Kidney (tissue), 22 donors: ENCODE measurements at regions of chr1 and their contacts with region 1.

Region 1: DNA sequence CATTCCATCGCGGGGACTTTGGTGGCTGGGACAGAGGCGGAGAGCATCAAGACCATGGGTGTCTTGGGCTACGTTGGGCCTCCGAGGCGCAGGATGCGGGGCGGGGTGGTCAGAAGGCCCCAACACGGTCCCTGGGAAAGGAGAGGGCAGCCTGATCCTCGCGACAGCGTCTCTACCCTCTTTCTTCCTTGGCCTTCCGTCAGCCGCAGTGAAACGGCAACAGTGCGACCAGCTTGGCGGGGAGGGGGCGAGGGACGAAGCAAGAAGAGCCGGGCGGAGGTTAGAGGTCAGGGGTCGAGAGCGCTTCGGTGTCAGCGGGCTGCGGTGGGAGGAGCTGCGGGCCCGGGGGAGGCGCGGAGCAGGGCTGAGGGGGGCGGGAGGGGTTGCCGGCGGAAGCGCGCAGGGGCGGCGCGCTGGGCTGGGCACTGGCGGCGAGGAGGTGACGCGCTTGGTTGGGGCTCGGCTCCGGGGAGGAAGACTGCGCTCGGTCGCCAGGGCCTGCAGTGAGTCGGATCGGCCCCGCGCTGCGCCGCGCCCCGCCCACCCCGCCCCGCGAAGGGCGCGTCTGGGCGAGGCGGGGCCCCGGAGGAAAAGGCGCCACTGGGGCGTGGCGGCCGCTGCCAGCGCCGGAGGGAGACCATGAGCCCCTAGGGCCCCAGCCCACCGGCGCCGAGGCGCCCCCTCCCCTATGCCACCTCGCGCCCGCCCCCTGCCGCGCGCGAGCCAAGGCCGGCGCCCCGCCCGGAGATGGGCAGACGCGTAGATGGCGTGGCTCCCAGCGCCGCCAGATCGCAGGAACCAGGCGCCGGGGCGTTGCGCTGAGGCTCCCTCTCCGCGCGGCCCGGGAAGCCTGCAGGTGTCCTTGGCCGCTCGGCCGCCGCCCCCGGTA is at the start of gene KCNC4:
- DNase-seq: peak; percentile 64 to 98 (median 81)
- H3K4me3 ChIP-seq: peak within 1 kb of the TSS; percentile 40 to 77 (median 56)
- H3K27ac ChIP-seq: peak within 1 kb of the TSS; percentile 93 to 95
- H3K4me1 ChIP-seq: peaks cover 0 to 28% (median under 1%) of the 10 kb centered on the region in 3 donors
- H3K27me3 ChIP-seq: peaks cover 11% of the 10 kb centered on the region
- CTCF ChIP-seq: no peak
- total RNA-seq, gene KCNC4: 52.9 TPM

Region 2: DNA sequence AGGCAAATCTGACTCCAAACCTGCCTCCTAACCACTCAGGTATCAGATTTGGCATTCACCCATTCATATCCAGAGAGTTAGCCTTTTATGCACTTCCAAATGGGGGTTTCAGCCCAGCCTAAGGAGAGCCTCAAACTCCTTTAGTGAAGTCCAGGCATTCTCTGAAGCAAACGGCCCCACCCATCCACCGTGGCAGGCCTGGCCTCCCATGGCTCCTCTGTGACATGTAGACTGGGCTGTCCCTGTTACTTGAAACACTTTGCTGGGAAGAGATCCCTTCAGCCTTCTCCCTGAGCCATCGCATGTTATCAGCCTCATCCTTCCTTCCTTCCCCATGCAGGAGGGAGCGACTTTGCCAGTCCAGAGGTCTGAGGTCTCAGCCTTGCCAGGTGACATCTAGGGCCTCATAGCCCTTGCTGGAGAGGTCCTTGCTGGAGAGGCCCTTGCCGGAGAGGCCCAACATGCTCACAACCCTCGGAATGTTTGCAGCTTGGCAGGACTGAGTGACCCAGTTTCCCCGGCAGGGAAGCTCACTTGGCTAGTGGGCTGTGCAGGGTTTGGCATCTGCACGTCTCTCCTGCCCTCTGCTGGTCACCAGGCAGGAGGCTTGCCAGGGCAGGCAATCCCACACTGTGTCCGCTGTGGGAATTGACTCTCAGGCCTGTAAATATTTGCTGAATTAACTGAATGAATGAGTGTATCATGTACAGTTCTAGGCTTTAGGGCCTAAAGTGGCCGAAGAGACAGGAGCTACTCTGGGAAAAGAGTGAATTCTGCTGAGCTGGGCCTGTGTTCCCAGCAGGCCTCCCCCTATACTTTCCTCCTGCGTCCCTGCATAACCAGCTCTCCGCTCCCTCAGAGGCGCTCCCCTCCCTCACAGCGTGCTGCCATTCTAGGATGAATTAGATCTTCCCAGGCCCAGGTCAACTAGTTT is 102.5 kb after region 1 on chr1:
- intact Hi-C with region 1: loop called (anchors 5 kb)
- DNase-seq: peak; percentile 79 to 91 (median 81)
- H3K4me3 ChIP-seq: no peak overlapping the region
- H3K27ac ChIP-seq: no peak overlapping the region
- H3K4me1 ChIP-seq: no peaks in the 10 kb centered on the region
- H3K27me3 ChIP-seq: no peaks in the 10 kb centered on the region
- CTCF ChIP-seq: peak; percentile 96